ENCODE measurements at regions of chr10 and their contacts with region 1.

Region 1: GRCh38 chr10:5563991-5564536 is 39.3 kb downstream of the CALML3 start:
- DNase-seq: peak; percentile 72
- H3K4me3 Mint-ChIP-seq: peak overlapping the region; percentile 59
- H3K27ac Mint-ChIP-seq: peak overlapping the region; percentile 79
- H3K4me1 Mint-ChIP-seq: peaks cover 40% of the 10 kb centered on the region
- H3K27me3 Mint-ChIP-seq: no peaks in the 10 kb centered on the region

Region 2: DNA sequence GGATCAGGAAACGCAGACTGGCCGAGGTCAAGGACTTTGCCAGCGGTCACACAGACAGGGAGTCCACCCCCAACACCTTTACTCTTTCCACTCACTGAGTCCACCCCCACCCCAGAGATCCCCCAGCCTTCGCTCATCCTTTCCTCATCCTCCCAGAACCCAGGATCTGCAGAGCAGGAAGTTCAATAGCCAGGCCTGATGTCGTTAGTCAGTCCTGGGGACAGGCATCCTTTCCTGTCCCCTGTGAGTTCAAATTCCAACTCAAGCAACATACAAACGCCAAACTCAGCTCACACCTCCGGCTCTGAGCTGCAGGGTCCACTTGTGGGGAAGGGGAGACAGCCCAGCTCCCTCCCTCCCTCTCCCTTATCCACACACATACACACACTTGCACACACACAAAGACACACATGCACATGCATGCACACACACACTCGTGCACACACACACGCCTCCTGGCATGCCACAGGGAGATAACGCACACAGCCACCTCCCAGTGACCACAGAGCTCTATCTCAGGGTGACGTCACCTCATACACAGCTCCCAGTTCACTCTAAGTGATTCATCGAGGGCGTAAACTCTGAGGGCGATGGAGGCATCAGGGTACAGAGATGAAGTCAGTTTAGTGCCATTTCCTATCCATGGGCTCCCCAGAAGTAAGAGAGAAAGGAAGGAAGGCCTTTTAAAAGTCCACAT is 15.4 kb before region 1 on chr10:
- CTCF ChIA-PET with region 1: interaction called, 4 read pairs
- intact Hi-C with region 1: loop called (anchors 1 kb)
- DNase-seq: peak; percentile 78
- H3K4me3 Mint-ChIP-seq: no peak overlapping the region
- H3K27ac Mint-ChIP-seq: no peak overlapping the region
- H3K4me1 Mint-ChIP-seq: peaks cover 30% of the 10 kb centered on the region
- H3K27me3 Mint-ChIP-seq: no peaks in the 10 kb centered on the region